ENCODE measurements at regions of chr12 and their contacts with region 1.

Region 1: DNA sequence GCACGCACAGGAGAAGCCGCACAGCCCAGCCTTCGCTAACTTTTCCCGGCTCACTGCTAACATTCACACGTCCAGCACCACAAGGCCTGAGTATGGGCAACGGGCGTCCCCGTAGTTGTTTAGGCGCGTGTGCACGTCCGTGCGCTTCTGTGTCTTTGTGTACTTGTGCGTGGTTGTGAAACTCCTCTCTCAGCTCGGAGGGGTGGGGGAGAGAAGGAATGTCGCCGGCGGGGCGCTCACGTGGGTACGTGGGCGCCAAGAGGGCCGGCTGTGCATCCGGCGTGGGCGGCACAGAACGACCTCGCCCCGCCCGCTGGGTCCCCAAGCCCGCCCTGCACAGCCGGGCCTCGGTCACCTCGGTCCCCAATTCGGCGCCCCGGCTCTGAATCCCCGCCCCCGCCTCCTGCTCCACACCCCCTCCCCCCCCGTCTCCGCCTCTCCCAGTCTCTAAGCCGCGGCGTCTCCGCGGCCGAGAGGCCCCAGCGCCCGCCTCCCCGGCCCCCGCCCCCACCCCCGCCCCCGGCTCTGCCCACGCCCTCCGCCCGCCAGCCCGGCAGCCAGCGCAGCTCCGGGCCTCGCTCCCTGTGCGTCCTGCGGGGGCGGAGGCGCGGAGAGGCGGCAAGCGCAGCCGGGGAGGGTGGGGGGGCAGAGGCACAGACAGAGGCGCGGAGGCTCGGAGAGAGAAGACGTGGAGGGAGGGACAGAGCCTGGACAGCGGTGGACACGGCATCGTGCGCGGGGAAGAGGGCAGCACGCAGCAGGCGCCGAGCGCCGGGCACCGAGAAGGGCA is at the start of gene NAB2:
- DNase-seq: peak; percentile 81 to 97 (median 92)
- ATAC-seq: peak; percentile 67 to 70
- H3K4me3 Mint-ChIP-seq: peak within 1 kb of the TSS; percentile 91 to 98 (median 96)
- H3K27ac Mint-ChIP-seq: peak within 1 kb of the TSS; percentile 89 to 99 (median 98)
- H3K4me1 Mint-ChIP-seq: peaks cover 43 to 77% (median 58%) of the 10 kb centered on the region in 4 donors
- H3K27me3 Mint-ChIP-seq: no peaks in the 10 kb centered on the region
- polyA plus RNA-seq, gene NAB2: 1.2 to 4.0 (median 1.3) TPM

Region 2: DNA sequence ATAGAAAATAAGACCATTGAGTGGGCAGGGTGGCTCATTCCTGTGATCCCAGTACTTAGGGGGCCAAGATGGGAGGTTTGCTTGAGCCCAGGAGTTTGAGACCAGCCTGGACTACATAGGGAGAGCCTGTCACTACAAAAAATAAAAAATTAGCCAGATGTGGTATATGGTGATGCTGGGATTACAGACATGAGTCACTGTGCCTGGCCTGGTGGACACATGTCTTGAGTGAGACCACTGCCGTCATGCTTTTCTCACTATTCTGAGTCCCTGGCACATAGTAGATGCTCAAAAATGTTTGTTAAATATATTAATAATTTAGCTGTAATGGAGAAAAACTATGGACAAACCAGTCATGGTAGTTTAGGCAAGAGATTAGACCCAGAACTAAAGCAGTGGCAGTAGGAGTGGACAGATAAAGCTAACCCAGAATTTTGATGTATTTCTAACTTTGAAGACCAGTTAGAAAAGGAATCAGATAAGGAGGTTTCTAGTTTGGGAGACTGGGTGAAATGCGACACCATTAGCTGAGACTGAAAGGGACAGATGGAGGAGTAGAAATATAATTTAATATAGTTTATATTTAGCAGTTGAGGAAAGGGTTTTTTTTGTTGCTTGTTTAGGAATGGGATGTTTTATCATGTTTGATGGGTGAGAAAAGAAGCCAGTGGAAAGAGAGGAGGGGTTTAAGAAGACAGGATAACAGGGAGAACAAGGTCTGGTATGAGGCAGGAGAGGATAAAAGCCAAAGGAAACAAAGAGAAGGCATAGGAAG is 393.1 kb before region 1 on chr12:
- POLR2A ChIA-PET with region 1: no interaction called
- DNase-seq: no peak
- ATAC-seq: no peak
- H3K4me3 Mint-ChIP-seq: no peak overlapping the region
- H3K27ac Mint-ChIP-seq: peak overlapping the region in 2 of 10 donors; percentile 49 to 68
- H3K4me1 Mint-ChIP-seq: peaks cover 0 to 2% (median under 1%) of the 10 kb centered on the region in 4 donors
- H3K27me3 Mint-ChIP-seq: no peaks in the 10 kb centered on the region

Region 3: DNA sequence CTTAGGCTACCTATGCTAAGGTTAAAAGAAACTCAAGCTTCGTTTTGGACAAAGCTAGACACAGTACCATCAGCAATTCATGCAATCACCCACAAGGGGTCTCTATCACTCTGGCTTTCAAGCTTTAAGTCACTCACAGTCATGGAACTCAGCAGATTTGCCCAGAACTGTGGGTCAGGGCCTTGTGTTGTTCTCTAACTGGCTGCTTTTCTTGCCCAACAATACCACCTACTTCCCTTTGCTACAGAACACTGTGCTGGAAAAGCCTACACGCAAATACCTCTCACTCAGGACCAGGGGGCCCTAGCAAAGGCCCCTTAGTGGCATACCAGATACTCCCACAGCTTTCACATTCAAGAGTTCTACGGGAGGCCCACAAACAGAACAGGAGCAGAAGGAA is 19.1 kb before region 1 on chr12:
- POLR2A ChIA-PET with region 1: interaction called, 15 read pairs
- DNase-seq: peak in 9 of 10 donors; percentile 43 to 80 (median 64)
- ATAC-seq: peak; percentile 99
- H3K4me3 Mint-ChIP-seq: peak overlapping the region in 2 of 10 donors; percentile 4 to 6
- H3K27ac Mint-ChIP-seq: peak overlapping the region; percentile 44 to 91 (median 86)
- H3K4me1 Mint-ChIP-seq: peaks cover 12 to 27% (median 20%) of the 10 kb centered on the region in 4 donors
- H3K27me3 Mint-ChIP-seq: no peaks in the 10 kb centered on the region

Region 4: DNA sequence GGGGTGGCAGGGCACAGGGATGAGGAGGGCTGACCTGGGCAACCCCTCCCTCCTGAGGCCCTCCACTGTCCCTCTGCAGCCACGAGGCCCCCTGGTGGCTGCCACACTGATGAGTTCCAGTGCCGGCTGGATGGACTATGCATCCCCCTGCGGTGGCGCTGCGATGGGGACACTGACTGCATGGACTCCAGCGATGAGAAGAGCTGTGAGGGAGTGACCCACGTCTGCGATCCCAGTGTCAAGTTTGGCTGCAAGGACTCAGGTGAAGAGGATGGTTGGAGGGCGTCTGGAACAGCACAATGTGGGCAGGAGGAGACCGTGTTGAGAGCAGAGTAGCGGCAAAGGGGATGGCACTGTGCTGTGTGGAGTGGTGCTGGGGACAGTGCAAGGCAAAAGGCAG is 84.4 kb after region 1 on chr12:
- POLR2A ChIA-PET with region 1: no interaction called
- DNase-seq: peak in 3 of 10 donors; percentile 7 to 12 (median 9)
- ATAC-seq: peak in 1 of 2 donors; percentile 61
- H3K4me3 Mint-ChIP-seq: no peak overlapping the region
- H3K27ac Mint-ChIP-seq: peak overlapping the region in 1 of 10 donors; percentile 43
- H3K4me1 Mint-ChIP-seq: peaks cover 0 to 11% (median 1%) of the 10 kb centered on the region in 4 donors
- H3K27me3 Mint-ChIP-seq: peaks cover 0 to 3% (median 1%) of the 10 kb centered on the region in 5 donors

Region 5: GRCh38 chr12:57182921-57183790 is 94.5 kb after region 1 on chr12:
- POLR2A ChIA-PET with region 1: no interaction called
- DNase-seq: peak; percentile 57 to 83 (median 76)
- ATAC-seq: peak; percentile 99 to 100
- H3K4me3 Mint-ChIP-seq: no peak overlapping the region
- H3K27ac Mint-ChIP-seq: peak overlapping the region in 2 of 10 donors; percentile 48 to 62
- H3K4me1 Mint-ChIP-seq: peaks cover 2 to 7% (median 5%) of the 10 kb centered on the region in 4 donors
- H3K27me3 Mint-ChIP-seq: no peaks in the 10 kb centered on the region

Region 6: DNA sequence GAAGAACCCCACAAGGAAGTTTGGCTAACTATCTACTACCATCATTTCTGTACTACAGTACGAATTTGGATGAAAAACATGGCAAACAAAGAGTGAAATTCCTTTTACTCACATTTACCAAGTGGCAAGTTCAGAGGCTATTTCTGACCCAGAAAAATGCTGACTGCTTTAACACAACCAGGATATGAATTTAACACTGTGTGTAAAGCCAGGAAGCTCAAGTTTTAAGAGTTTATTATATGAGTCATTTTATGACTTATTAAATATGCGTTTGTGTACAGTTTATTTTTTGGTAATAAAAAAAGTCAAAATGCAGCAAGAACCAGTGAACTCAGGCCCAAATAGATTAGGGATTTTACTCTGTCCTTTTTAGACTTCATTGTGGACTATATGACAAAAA is 220.8 kb after region 1 on chr12:
- POLR2A ChIA-PET with region 1: no interaction called
- DNase-seq: no peak
- ATAC-seq: no peak
- H3K4me3 Mint-ChIP-seq: no peak overlapping the region
- H3K27ac Mint-ChIP-seq: peak overlapping the region in 1 of 10 donors; percentile 60
- H3K4me1 Mint-ChIP-seq: peaks cover 0 to 4% (median 0%) of the 10 kb centered on the region in 4 donors
- H3K27me3 Mint-ChIP-seq: no peaks in the 10 kb centered on the region